Heart right ventricle (tissue), 16 donors: ENCODE measurements at regions of chr16 and their contacts with region 1.

Region 1: DNA sequence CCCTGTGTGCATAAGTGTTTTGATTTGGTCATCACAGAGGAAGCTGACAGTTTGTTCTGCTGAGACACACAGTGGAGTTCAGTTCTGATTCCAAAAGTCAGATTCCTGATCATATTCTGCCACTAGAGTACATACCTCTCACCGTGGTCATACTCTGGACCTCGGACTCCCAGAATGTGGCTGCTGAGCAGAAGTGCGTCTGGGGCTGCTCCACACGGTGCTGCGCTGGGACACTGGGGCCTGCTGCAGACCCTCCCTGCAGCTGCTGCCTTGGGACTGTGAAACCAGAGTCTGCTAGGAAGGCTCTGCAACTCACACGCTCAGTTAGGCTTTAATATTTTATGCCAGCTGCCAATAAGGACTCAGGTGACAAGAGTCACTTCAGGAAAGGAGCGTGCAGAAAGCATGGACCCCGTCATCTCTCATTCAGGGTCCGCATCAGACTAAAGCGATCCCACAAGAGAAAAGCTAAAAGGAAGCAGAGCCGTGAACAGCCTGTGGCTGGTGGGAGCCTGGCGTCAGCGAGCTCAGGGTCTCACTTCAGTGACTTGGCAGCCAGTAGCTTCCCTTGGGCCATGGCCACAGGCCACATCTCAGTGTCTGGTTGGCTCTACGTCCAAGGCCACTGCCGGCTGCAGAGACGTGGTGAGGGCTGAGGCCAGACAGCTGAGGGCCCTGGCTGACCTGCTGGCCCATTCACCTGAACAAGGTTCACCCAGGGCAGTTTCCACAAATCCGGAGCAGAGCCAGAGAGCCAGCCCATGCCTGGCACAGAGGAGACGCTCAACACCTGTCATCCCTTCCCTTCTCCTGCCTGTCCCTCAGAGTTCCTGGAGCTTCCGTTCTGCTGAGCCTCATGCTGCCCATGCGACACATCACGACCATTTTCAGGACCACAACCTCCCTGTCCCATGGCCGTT is 24.7 kb upstream of the KIFC3 start:
- DNase-seq: peak in 1 of 2 donors; percentile 54
- ATAC-seq: peak in 7 of 8 donors; percentile 18 to 68 (median 59)
- H3K4me3 ChIP-seq: no peak overlapping the region
- H3K27ac ChIP-seq: peak overlapping the region in 7 of 10 donors; percentile 38 to 63 (median 48)
- H3K4me1 ChIP-seq: peaks cover 0 to 31% (median 6%) of the 10 kb centered on the region in 9 donors
- H3K27me3 ChIP-seq: no peaks in the 10 kb centered on the region
- CTCF ChIP-seq: no peak

Region 2: DNA sequence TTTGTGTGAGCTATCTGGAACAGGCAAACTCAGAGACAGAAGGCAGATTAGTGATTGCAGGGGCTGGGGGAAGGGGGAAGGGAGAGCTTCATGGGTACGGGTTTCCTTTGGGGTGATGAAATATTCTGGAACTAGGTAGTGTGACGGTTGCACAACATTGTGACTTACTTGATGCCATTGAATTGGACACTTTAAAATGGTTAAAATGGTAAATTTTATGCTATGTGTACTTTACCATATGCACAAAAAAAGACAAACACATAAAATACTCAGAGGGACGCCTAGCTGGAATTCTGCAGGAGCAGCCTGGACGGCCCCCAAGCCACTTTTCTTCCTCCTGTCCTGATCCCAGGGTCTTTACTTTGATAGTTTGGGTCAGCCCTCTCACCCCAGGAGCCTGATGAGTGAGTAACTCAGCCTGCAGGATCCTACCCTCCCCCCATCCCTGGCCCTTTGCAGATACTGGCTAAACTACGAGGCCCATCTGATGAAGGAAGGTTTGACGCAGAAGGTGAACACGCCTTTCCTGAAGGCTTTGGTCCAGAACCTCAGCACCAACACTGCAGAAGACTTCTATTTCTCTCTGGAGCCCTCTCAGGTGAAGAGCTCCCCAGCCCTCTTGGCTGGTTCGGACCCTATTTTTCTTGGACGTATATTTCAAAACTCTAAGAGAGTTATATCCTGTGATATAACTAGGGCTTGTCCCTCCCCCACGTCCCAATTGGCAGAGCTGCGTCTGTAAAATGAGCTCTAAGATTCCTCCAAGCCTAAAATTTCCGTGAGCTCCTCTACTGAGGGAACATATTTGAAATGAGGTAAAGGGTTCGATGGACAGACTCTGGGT is 151.0 kb before region 1 on chr16:
- intact Hi-C with region 1: no loop called
- DNase-seq: peak in 1 of 2 donors; percentile 34
- ATAC-seq: peak in 5 of 8 donors; percentile 19 to 82 (median 50)
- H3K4me3 ChIP-seq: no peak overlapping the region
- H3K27ac ChIP-seq: peak overlapping the region in 1 of 10 donors; percentile 22
- H3K4me1 ChIP-seq: peaks cover 0 to 16% (median 0%) of the 10 kb centered on the region in 9 donors
- H3K27me3 ChIP-seq: peaks cover 0 to 4% (median 0%) of the 10 kb centered on the region in 7 donors
- CTCF ChIP-seq: no peak

Region 3: GRCh38 chr16:57795431-57795878 is 31.5 kb before region 1 on chr16:
- intact Hi-C with region 1: loop called in 1 of 10 experiments (anchors 5 kb)
- DNase-seq: peak; percentile 32 to 50
- ATAC-seq: peak in 5 of 8 donors; percentile 2 to 34 (median 27)
- H3K4me3 ChIP-seq: no peak overlapping the region
- H3K27ac ChIP-seq: peak overlapping the region in 5 of 10 donors; percentile 6 to 52 (median 28)
- H3K4me1 ChIP-seq: peaks cover 19 to 76% (median 72%) of the 10 kb centered on the region in 9 donors
- H3K27me3 ChIP-seq: peaks cover 0 to 8% (median 0%) of the 10 kb centered on the region in 7 donors
- CTCF ChIP-seq: peak in 7 of 9 donors; percentile 33 to 53 (median 48)

Region 4: GRCh38 chr16:57802341-57803133 is 24.4 kb before region 1 on chr16 and contains the start of gene KIFC3:
- intact Hi-C with region 1: loop called in 1 of 10 experiments (anchors 2 kb)
- DNase-seq: peak; percentile 90 to 91
- ATAC-seq: peak; percentile 9 to 76 (median 34)
- H3K4me3 ChIP-seq: peak within 1 kb of the TSS; percentile 51 to 85 (median 66)
- H3K27ac ChIP-seq: peak within 1 kb of the TSS; percentile 89 to 99 (median 96)
- H3K4me1 ChIP-seq: peaks cover 34 to 81% (median 68%) of the 10 kb centered on the region in 9 donors
- H3K27me3 ChIP-seq: peaks cover 0 to 12% (median 0%) of the 10 kb centered on the region in 7 donors
- CTCF ChIP-seq: peak in 5 of 9 donors; percentile 34 to 60 (median 44)
- total RNA-seq, gene KIFC3: 42.5 to 91.4 (median 63.5) TPM